ENCODE measurements at regions of chr10 and their contacts with region 1.

Region 1: GRCh38 chr10:84523526-84523925 is 195.1 kb downstream of the CCSER2 start:
- DNase-seq: no peak
- H3K4me3 ChIP-seq: no peak overlapping the region
- H3K27ac ChIP-seq: no peak overlapping the region
- H3K4me1 ChIP-seq: peaks cover 34% of the 10 kb centered on the region
- H3K27me3 ChIP-seq: no peaks in the 10 kb centered on the region
- CTCF ChIP-seq: no peak

Region 2: DNA sequence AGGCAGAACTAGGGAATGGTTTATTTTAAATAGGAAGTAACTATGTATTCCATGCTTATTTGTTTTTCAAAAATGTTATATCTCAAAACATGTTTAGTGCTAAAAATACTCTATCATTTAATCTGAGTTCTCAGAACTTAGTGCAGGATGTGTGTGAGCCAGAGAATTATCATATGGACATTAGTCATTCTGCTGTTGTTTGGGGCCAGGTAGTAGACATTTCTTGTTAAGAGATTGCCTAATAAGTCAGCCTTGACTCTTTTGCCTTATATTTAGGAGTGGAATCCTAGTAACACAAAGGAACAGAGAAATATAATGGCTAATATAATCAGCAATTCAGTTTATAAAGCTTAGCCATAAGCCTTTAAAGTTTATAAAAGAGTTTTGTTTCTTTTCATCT is 45.4 kb before region 1 on chr10:
- CTCF ChIA-PET with region 1: no interaction called
- dilution Hi-C with region 1: no loop called
- in situ Hi-C with region 1: no loop called
- intact Hi-C with region 1: loop called (anchors 10 kb)
- DNase-seq: peak; percentile 42
- H3K4me3 ChIP-seq: no peak overlapping the region
- H3K27ac ChIP-seq: no peak overlapping the region
- H3K4me1 ChIP-seq: no peaks in the 10 kb centered on the region
- H3K27me3 ChIP-seq: no peaks in the 10 kb centered on the region
- CTCF ChIP-seq: no peak

Region 3: GRCh38 chr10:84493951-84494848 is 29.3 kb before region 1 on chr10:
- CTCF ChIA-PET with region 1: no interaction called
- dilution Hi-C with region 1: no loop called
- in situ Hi-C with region 1: no loop called
- intact Hi-C with region 1: loop called (anchors 1 kb)
- DNase-seq: peak; percentile 75
- H3K4me3 ChIP-seq: peak overlapping the region in 2 of 3 experiments; percentile 2 to 21
- H3K27ac ChIP-seq: peak overlapping the region; percentile 50
- H3K4me1 ChIP-seq: peaks cover 23% of the 10 kb centered on the region
- H3K27me3 ChIP-seq: no peaks in the 10 kb centered on the region
- CTCF ChIP-seq: no peak